Lower leg skin (tissue), 4 donors: ENCODE measurements at regions of chr4 and their contacts with region 1.

Region 1: DNA sequence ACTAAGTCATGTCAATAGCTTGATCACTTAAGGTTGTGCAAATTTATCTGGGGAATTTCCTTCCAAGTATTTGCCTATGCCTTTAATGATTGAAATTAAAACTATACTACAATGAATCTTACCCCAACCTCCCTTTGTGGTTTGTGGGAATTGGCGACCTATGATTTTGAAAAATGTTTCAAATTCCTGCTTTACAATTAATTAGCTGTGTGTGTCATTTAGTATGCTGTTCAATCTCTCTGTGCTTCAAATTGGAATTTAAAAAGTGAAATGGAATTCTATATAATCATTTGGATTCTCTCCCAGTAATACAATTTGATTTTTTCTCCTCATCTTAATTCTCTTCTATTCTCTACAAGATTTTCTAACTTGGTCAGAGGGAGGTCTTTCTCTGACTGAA is 2319.5 kb downstream of the ARAP2 start:
- DNase-seq: no peak
- H3K4me3 ChIP-seq: no peak overlapping the region
- CTCF ChIP-seq: no peak
- POLR2A ChIP-seq: no peak

Region 2: GRCh38 chr4:34861661-34862060 is 936.9 kb after region 1 on chr4:
- intact Hi-C with region 1: loop called (anchors 5 kb)
- DNase-seq: no peak
- H3K4me3 ChIP-seq: no peak overlapping the region
- CTCF ChIP-seq: no peak
- POLR2A ChIP-seq: no peak